Heart right ventricle (tissue), 16 donors: ENCODE measurements at regions of chr3 and their contacts with region 1.

Region 1: DNA sequence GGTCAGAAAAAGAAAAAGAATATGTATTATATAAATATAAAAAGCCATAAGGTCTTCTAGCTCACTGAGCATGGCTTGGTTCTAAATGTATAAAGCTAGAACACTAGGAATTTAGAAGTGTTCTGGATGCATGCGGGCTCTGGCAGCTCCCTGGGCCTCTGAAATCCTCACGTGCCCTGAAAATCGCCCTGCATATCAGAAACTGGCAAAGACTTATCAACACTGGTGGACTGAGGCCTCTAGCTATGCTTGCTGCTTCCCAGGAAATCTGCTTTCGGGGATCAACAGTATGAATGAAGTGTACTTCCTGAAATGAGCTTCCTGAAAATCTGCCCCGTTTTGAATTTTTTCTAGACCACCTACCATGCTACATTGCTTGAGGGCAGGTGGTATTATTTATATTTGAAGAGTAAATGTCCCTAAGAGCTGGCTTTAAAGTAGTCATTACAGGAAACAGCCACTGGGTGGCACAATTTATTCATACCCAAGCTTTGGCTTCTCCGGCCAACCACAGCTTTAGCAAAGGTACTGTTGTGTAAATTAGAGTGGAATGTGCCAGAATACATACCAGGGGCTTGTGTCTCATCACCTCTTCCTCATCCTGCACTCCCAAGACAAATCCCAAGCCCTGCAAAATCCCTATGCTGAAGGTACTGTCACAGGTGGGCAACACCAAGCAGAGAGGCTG is 17.7 kb downstream of the CRTAP start:
- DNase-seq: peak in 1 of 2 donors; percentile 23
- ATAC-seq: peak; percentile 46 to 84 (median 70)
- H3K4me3 ChIP-seq: no peak overlapping the region
- H3K27ac ChIP-seq: no peak overlapping the region
- H3K4me1 ChIP-seq: peaks cover 0 to 9% (median 0%) of the 10 kb centered on the region in 9 donors
- H3K27me3 ChIP-seq: no peaks in the 10 kb centered on the region
- CTCF ChIP-seq: peak; percentile 50 to 82 (median 76)

Region 2: DNA sequence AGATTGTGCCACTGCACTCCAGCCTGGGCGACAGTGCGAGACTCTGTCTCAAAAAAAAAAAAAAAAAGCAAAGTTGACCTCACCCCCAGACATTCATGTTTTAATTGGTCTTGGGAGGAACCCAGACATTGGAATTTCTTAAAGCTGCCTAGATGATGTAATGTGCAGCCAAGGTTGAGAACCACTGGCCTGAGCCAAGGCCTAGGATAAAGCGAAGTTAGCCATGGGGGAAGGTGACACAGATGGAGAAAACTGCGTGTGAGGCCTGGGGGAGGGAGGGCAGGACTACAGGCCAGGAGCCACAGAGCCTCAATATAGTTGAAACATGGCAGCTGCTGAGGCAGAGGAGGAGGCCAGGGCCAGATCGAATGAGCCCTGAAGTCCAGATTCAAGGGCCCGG is 55.5 kb before region 1 on chr3:
- intact Hi-C with region 1: no loop called
- DNase-seq: no peak
- ATAC-seq: peak in 3 of 8 donors; percentile 36 to 69 (median 41)
- H3K4me3 ChIP-seq: no peak overlapping the region
- H3K27ac ChIP-seq: peak overlapping the region in 1 of 10 donors; percentile 2
- H3K4me1 ChIP-seq: peaks cover 0 to 10% (median 0%) of the 10 kb centered on the region in 9 donors
- H3K27me3 ChIP-seq: no peaks in the 10 kb centered on the region
- CTCF ChIP-seq: no peak

Region 3: DNA sequence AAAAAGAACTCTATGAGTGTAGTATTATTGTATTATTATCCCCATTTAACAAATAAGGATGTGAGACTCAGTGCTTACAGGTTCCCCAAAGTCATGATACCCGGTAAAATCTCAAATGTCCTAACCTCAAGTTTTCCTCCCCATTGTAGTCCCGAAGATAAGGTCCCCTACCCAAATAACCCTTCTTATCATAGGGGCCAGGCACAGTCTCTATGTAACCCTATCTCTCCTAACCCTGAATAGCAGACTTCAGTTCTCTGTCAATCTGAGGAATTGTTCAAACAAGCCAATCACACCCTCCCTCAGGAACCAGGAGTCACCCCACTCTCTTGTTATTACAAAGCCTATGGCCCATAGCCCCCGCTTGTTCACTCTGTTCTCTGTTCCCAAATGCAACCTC is 97.6 kb after region 1 on chr3:
- intact Hi-C with region 1: loop called in 1 of 10 experiments (anchors 10 kb)
- DNase-seq: no peak
- ATAC-seq: no peak
- H3K4me3 ChIP-seq: no peak overlapping the region
- H3K27ac ChIP-seq: no peak overlapping the region
- H3K4me1 ChIP-seq: no peaks in the 10 kb centered on the region
- H3K27me3 ChIP-seq: peaks cover 0 to 13% (median 0%) of the 10 kb centered on the region in 7 donors
- CTCF ChIP-seq: no peak

Region 4: DNA sequence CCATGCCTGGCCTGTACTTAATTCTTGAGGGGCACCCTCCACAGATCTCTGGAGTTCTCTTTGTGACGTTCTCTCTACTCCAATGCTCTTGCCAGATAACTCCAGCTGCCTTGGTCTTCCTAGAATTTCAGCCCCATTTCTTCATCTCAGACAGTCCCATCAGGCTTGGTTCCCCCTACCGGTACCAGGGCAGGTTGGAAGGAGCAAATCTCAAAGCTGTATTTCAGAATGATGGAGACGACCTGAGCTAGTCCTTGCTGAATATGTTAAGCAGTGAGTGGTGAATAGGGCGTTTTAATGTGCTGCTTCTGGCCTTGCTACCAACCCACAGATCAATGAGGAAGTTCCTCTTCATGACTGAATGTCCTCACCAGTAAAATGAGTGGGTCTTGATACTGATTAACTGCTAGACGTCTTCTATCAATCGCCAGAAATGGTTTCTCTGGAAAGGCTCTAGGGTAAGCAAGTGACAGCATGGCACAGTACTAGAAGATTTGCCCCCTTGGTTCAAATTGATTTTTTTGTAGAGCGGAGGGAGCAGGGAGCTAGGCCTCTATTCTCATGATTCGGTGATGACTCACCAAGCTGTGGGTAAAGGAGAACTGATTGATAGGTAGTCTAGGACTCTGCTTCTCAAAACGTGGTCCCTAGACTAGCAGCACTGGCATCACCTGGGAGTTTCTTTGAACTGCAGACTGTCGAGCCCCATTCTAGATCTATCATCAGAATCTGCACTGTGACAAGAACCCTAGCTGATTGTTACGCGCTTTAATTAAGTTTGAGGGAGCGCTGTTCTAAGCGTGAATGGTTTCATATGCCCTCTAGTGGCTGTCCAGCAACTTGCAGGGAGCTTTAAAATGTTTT is 241.0 kb after region 1 on chr3:
- intact Hi-C with region 1: loop called (anchors 1 to 5 kb)
- DNase-seq: peak in 1 of 2 donors; percentile 34
- ATAC-seq: peak; percentile 43 to 74 (median 62)
- H3K4me3 ChIP-seq: no peak overlapping the region
- H3K27ac ChIP-seq: no peak overlapping the region
- H3K4me1 ChIP-seq: peaks cover 0 to 9% (median 0%) of the 10 kb centered on the region in 9 donors
- H3K27me3 ChIP-seq: no peaks in the 10 kb centered on the region
- CTCF ChIP-seq: peak; percentile 88 to 94 (median 91)

Region 5: GRCh38 chr3:33787328-33788009 is 656.0 kb after region 1 on chr3:
- intact Hi-C with region 1: loop called in 2 of 10 experiments (anchors 5 to 10 kb)
- DNase-seq: peak in 1 of 2 donors; percentile 57
- ATAC-seq: peak; percentile 71 to 93 (median 85)
- H3K4me3 ChIP-seq: peak overlapping the region in 7 of 10 donors; percentile 11 to 43 (median 35)
- H3K27ac ChIP-seq: no peak overlapping the region
- H3K4me1 ChIP-seq: peaks cover 0 to 9% (median 0%) of the 10 kb centered on the region in 9 donors
- H3K27me3 ChIP-seq: no peaks in the 10 kb centered on the region
- CTCF ChIP-seq: peak; percentile 58 to 91 (median 79)